ENCODE measurements at regions of chr5 and their contacts with region 1.

Region 1: GRCh38 chr5:157718519-157718918 is 12.7 kb upstream of the THG1L start:
- DNase-seq: peak; percentile 31
- H3K4me3 Mint-ChIP-seq: no peak overlapping the region
- H3K27ac Mint-ChIP-seq: no peak overlapping the region
- H3K4me1 Mint-ChIP-seq: peaks cover 25% of the 10 kb centered on the region
- H3K27me3 Mint-ChIP-seq: no peaks in the 10 kb centered on the region

Region 2: GRCh38 chr5:157342822-157343402 is 375.6 kb before region 1 on chr5:
- CTCF ChIA-PET with region 1: interaction called, 13 read pairs
- DNase-seq: peak; percentile 48
- H3K4me3 Mint-ChIP-seq: no peak overlapping the region
- H3K27ac Mint-ChIP-seq: no peak overlapping the region
- H3K4me1 Mint-ChIP-seq: peaks cover 8% of the 10 kb centered on the region
- H3K27me3 Mint-ChIP-seq: no peaks in the 10 kb centered on the region

Region 3: GRCh38 chr5:157540707-157541446 is 177.6 kb before region 1 on chr5:
- CTCF ChIA-PET with region 1: interaction called, 12 read pairs
- DNase-seq: peak; percentile 61
- H3K4me3 Mint-ChIP-seq: peak overlapping the region; percentile 27
- H3K27ac Mint-ChIP-seq: peak overlapping the region; percentile 88
- H3K4me1 Mint-ChIP-seq: peaks cover 87% of the 10 kb centered on the region
- H3K27me3 Mint-ChIP-seq: no peaks in the 10 kb centered on the region

Region 4: DNA sequence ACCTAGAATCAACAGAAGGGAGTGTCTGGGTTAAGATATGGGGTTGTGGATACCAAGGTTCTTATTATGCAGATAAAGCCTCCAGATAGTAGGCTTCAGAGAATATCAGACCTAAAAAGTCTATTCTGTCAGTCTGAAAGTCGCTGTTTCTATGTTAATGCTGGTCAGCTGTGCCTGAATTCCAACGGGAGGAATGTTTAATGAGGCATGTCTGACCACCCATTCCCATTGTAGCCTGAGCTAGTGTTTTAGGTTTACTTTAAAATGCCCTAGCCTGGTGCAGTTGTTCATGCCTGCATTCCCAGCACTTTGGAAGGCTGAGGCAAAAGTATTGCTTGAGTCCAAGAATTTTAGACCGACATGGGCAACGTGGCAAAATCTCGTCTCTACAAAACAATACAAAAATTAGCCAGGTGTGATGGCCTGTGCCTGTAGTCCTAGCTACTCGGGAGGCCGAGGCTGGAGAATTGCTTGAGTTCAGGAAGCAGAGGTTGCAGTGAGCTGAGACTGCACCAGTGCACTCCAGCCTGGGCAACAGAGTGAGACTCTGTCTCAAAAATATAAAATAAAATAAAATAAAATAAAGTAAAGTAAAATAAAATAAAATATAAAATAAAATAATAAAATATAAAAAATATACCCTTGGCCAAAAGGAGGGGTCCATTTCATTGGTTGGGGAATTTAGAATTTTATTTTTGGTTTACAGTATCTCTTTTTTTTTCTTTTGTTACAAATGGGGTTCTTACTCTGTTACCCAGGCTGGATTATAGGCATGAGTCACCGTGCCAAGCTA is 58.5 kb before region 1 on chr5:
- CTCF ChIA-PET with region 1: no interaction called
- DNase-seq: no peak
- H3K4me3 Mint-ChIP-seq: no peak overlapping the region
- H3K27ac Mint-ChIP-seq: no peak overlapping the region
- H3K4me1 Mint-ChIP-seq: no peaks in the 10 kb centered on the region
- H3K27me3 Mint-ChIP-seq: peaks cover 13% of the 10 kb centered on the region

Region 5: DNA sequence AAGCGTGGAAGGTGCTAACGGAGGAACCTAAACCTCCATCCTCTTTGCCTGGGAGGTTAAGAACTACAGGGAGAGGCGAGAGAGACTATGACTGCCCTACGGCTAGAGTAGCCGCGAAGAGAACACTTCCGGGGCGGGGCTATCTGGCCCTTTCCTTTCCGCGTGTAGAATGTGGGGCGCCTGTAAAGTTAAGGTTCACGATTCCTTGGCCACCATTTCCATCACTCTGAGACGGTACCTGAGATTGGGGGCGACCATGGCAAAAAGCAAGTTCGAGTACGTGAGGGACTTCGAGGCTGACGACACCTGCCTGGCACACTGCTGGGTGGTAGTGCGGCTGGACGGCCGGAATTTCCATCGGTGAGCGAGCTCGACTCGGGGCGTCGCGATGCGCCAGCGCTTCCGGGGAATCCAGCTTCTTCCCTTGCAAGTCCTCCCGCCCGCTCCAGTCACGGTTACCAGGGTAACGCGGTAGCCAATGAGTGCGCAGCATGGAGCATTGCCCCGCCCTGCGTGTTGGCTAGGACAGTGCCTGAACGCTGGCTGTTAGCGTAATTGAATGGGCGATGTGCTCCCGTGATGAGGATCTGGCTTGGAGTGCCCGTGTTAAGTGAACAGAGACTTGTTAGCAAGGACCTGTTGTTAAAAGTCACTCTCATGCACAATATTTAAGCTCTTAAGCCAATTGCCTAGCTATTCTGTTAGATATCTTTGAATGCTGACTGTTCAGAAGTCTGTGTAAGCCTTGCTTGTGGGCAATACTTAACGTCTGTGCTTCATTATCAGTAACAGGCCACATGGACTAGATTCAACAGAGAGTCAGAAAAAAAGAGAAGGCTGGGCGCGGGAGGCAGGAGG is 13.0 kb after region 1 on chr5 and contains the start of gene THG1L:
- CTCF ChIA-PET with region 1: interaction called, 13 read pairs
- DNase-seq: peak; percentile 99
- H3K4me3 Mint-ChIP-seq: peak within 1 kb of the TSS; percentile 95
- H3K27ac Mint-ChIP-seq: peak within 1 kb of the TSS; percentile 96
- H3K4me1 Mint-ChIP-seq: peaks cover 22% of the 10 kb centered on the region
- H3K27me3 Mint-ChIP-seq: no peaks in the 10 kb centered on the region

Region 6: GRCh38 chr5:158108177-158108576 is 389.7 kb after region 1 on chr5:
- CTCF ChIA-PET with region 1: no interaction called
- DNase-seq: no peak
- H3K4me3 Mint-ChIP-seq: no peak overlapping the region
- H3K27ac Mint-ChIP-seq: no peak overlapping the region
- H3K4me1 Mint-ChIP-seq: no peaks in the 10 kb centered on the region
- H3K27me3 Mint-ChIP-seq: peaks cover 13% of the 10 kb centered on the region